H1 (cell line): ENCODE measurements at regions of chr1 and their contacts with region 1.

Region 1: GRCh38 chr1:197902454-197903195 is at the start of gene C1orf53:
- DNase-seq: peak in 1 of 2 experiments; percentile 91
- H3K4me3 ChIP-seq: peak within 1 kb of the TSS; percentile 48 to 76 (median 61)
- H3K27ac ChIP-seq: peak within 1 kb of the TSS; percentile 73; the same call in 1 of the 2 replicates
- H3K4me1 ChIP-seq: peaks cover 0 to 3% (median 2%) of the 10 kb centered on the region in 4 experiments; a peak in 3 of 7 replicates
- H3K27me3 ChIP-seq: peaks cover 32 to 48% (median 42%) of the 10 kb centered on the region in 4 experiments
- CTCF ChIP-seq: no peak
- EP300 ChIP-seq: no peak
- POLR2A ChIP-seq: peak in 1 of 2 experiments; percentile 74; a peak in 2 of 3 replicates
- RAD21 ChIP-seq: peak in 1 of 2 experiments; percentile 0; a peak in 1 of 4 replicates
- total RNA-seq, gene C1orf53: 0.56 and 0.80 TPM in 2 replicates

Region 2: GRCh38 chr1:197736644-197737043 is 166.0 kb before region 1 on chr1:
- CTCF ChIA-PET with region 1: no interaction called
- POLR2A ChIA-PET with region 1: no interaction called
- DNase-seq: no peak
- H3K4me3 ChIP-seq: no peak overlapping the region
- H3K27ac ChIP-seq: no peak overlapping the region
- H3K4me1 ChIP-seq: peaks cover 0 to 3% (median 0%) of the 10 kb centered on the region in 4 experiments; a peak in 1 of 7 replicates
- H3K27me3 ChIP-seq: no peaks in the 10 kb centered on the region
- CTCF ChIP-seq: no peak
- EP300 ChIP-seq: no peak
- POLR2A ChIP-seq: no peak
- RAD21 ChIP-seq: no peak

Region 3: GRCh38 chr1:197924516-197925123 is 22.0 kb after region 1 on chr1:
- CTCF ChIA-PET with region 1: interaction called, 10 read pairs
- POLR2A ChIA-PET with region 1: interaction called, 4 read pairs
- DNase-seq: no peak
- H3K4me3 ChIP-seq: no peak overlapping the region
- H3K27ac ChIP-seq: no peak overlapping the region
- H3K4me1 ChIP-seq: peaks cover 8 to 17% (median 10%) of the 10 kb centered on the region in 4 experiments
- H3K27me3 ChIP-seq: peaks cover 28 to 40% (median 37%) of the 10 kb centered on the region in 4 experiments
- CTCF ChIP-seq: peak; percentile 9 to 83 (median 75)
- EP300 ChIP-seq: no peak
- POLR2A ChIP-seq: no peak
- RAD21 ChIP-seq: peak; percentile 88 to 90